ENCODE measurements at regions of chr21 and their contacts with region 1.

Region 1: DNA sequence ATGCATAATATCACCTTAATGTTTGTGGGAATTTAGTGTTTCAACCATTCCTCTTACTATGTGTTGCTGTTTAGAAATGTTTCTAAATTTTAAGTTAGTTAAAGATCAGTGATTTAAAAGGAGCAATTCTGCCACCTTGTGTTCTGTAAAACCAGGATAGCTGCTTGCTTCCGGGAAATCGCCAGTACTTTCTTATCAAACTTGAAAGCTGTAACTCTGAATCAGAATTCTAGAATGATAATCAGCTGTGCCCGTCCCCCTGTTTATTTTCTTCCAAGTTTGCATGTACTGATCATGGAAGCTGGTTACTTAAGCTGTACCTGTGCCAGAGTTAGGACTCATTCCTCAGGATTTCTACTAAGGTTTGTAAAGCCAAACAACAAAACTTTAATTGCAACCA is 656.4 kb downstream of the LTN1 start:
- DNase-seq: peak; percentile 16
- ATAC-seq: no peak
- H3K4me3 ChIP-seq: no peak overlapping the region
- H3K27ac ChIP-seq: no peak overlapping the region
- H3K4me1 ChIP-seq: no peaks in the 10 kb centered on the region
- H3K27me3 ChIP-seq: no peaks in the 10 kb centered on the region
- CTCF ChIP-seq: peak; percentile 61
- EP300 ChIP-seq: no peak
- POLR2A ChIP-seq: no peak
- RAD21 ChIP-seq: peak; percentile 38; the same call in 1 of the 2 replicates

Region 2: DNA sequence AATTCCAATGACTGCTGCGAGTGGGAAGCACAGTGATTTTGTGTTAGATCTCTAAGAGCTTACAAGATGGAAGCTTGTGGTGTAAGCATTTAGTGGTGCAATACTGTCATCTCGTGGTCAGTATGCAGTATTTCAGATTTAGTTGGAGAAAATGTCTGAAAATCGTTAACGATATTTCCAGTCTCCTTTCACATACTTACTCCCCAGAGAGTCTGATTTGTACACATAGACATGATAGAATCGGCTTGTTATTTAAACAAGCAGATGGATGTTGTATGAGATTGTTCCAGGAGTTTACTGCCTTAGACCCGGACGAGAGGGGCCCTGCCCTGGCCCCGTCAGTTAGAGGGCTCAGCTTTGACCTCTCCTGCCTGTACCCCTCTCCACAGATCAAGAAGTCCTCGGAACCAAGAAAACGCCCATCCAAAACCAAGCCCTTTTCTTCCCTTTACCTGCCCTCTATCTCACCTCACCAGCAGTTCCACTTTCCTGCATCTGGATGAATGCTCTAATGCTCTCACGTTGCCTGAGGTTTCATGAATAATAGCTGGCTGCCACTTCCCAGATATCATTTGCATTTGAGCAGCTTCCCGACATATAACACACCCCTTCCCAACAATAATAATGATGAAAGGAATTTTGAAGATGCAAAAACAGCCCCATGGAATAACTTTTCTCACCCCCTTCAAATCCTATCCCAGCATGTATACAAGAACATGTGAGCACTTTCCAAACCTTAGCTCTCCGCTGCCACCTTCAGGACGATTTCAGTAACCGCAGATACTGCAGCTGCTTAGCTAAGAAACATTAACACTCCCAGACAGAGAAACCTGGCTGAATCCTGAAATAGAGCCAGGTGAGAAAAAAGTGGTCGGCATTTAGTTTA is 409.1 kb after region 1 on chr21:
- CTCF ChIA-PET with region 1: interaction called, 4 read pairs
- POLR2A ChIA-PET with region 1: no interaction called
- in situ Hi-C with region 1: no loop called
- intact Hi-C with region 1: loop called (anchors 1 kb)
- DNase-seq: peak; percentile 70
- ATAC-seq: peak; percentile 96
- H3K4me3 ChIP-seq: peak overlapping the region; percentile 25 to 59 (median 52); a peak in 5 of 6 replicates
- H3K27ac ChIP-seq: no peak overlapping the region
- H3K4me1 ChIP-seq: peaks cover 5% of the 10 kb centered on the region; the same call in 1 of the 2 replicates
- H3K27me3 ChIP-seq: no peaks in the 10 kb centered on the region
- CTCF ChIP-seq: peak; percentile 87
- EP300 ChIP-seq: no peak
- POLR2A ChIP-seq: no peak
- RAD21 ChIP-seq: peak; percentile 90

Region 3: GRCh38 chr21:28943631-28944030 is 607.3 kb after region 1 on chr21:
- CTCF ChIA-PET with region 1: no interaction called
- POLR2A ChIA-PET with region 1: no interaction called
- in situ Hi-C with region 1: no loop called
- intact Hi-C with region 1: loop called (anchors 5 kb)
- DNase-seq: no peak
- ATAC-seq: no peak
- H3K4me3 ChIP-seq: no peak overlapping the region
- H3K27ac ChIP-seq: no peak overlapping the region
- H3K4me1 ChIP-seq: no peaks in the 10 kb centered on the region
- H3K27me3 ChIP-seq: no peaks in the 10 kb centered on the region
- CTCF ChIP-seq: no peak
- EP300 ChIP-seq: no peak
- POLR2A ChIP-seq: no peak
- RAD21 ChIP-seq: no peak